ENCODE measurements at regions of chr1 and their contacts with region 1.

Region 1: GRCh38 chr1:94783342-94784264 is 36.6 kb upstream of the SLC44A3 start:
- DNase-seq: peak; percentile 93 to 94
- ATAC-seq: peak; percentile 96
- H3K4me3 ChIP-seq: no peak overlapping the region
- H3K27ac ChIP-seq: peak overlapping the region; percentile 97 to 99
- H3K4me1 ChIP-seq: peaks cover 0 to 3% of the 10 kb centered on the region in 2 donors
- H3K27me3 ChIP-seq: no peaks in the 10 kb centered on the region

Region 2: DNA sequence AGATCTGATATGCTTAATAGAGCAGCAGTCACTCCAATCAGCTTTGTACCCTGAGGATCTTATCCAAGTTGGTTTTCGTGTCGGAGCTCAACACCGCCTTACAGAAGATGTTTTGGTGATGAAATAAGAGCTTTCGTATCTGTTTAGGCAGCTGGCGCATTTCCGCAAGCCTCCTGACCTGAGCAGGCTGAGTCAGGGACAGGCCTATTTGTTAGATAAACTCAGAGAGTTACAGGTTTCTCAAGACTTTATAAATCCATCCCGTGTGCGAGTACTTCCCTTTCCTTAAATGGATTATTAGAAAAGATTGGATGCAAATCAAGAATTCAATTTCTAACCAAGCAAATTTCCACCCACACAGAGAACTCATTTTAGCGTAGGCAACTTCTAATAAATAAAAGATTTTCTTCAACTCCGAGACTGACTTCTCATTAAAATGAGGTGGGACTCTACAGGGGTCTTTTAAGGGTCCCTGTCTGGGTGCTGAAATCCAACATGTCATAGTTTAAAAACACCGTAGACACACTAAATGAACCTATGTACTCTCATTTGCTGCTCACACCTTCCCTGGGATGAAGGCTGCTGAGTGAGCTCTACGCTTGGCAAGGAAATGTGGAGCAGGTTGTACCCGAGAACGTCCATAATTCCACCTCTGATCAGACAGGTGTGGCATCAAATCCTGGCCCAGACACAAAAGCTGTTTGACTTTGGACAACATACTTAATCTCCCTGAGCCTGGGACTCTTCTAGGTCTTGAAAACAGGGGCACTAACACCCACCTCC is 135.2 kb before region 1 on chr1:
- intact Hi-C with region 1: loop called in 1 of 2 experiments (anchors 5 kb)
- DNase-seq: peak; percentile 87 to 88
- ATAC-seq: peak; percentile 79
- H3K4me3 ChIP-seq: no peak overlapping the region
- H3K27ac ChIP-seq: peak overlapping the region; percentile 45 to 64
- H3K4me1 ChIP-seq: peaks cover 0 to 6% of the 10 kb centered on the region in 2 donors
- H3K27me3 ChIP-seq: no peaks in the 10 kb centered on the region

Region 3: DNA sequence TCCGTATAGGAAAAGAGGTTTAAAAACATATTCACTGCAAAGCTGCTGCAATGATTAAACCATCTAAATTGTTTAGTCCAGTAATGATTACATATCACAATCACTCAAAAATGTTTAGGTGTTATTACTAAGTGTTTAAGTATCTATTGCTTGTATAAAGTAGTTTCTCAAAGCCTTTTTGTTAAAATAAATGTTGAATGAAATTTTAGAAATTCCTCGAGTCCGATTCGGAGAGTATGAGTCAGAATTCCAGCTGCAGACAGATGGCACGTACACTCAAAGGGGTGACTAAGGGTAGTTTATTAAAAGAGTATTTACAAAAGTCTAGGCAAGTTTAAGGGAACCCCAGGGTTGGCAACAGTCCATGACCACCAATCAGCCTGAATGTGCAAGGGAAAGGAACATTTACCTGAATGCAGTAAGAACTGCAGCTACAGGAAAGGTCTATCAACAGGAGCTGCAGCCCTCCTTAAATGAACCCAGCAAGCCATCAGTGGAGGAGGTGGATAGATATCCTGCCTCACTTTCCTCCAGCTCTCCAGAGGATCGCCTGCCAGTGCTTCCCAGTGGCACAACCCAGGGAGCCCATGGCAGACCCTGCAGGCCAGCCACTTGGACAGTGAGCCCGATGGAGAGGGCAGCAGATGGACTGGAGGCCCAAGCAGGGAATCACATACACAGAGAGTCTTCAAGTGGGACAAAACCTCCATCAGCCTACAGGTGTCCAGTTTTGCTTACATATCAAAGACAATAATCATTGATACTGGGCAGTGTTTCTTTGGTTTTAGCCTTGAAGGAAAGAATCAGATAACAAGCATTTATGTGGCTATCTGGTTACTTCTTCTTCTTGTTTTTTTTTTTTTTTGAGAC is 55.5 kb before region 1 on chr1:
- intact Hi-C with region 1: loop called in 1 of 2 experiments (anchors 2 kb)
- DNase-seq: peak in 1 of 2 donors; percentile 82
- ATAC-seq: peak; percentile 46
- H3K4me3 ChIP-seq: no peak overlapping the region
- H3K27ac ChIP-seq: peak overlapping the region in 1 of 2 donors; percentile 32
- H3K4me1 ChIP-seq: peaks cover 0 to 6% of the 10 kb centered on the region in 2 donors
- H3K27me3 ChIP-seq: no peaks in the 10 kb centered on the region

Measured in aorta (tissue), 5 donors.